ENCODE measurements at regions of chr7 and their contacts with region 1.

Region 1: GRCh38 chr7:73738612-73739374 is at the start of gene ABHD11:
- DNase-seq: peak; percentile 99
- ATAC-seq: peak; percentile 86
- H3K4me3 Mint-ChIP-seq: peak within 1 kb of the TSS; percentile 91
- H3K27ac Mint-ChIP-seq: peak within 1 kb of the TSS; percentile 93
- H3K4me1 Mint-ChIP-seq: peaks cover 19% of the 10 kb centered on the region
- H3K27me3 Mint-ChIP-seq: no peaks in the 10 kb centered on the region
- total RNA-seq, gene ABHD11: 14.4 to 17.8 TPM

Region 2: DNA sequence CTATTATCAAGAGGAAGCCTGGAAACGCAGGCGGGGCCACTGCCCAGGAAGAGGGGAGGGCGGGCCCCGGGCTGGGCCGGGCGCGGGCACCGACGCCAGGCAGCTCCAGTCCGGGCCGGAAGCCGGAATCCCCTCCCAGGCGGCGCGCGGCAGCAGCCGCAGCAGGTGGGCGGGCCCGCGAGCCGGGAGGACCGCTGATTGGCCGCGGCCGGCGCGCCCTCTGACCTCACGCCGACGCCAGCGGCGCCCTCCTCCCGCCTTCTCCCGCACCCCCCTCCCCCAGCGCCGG is 181.7 kb before region 1 on chr7:
- CTCF ChIA-PET with region 1: interaction called, 3 read pairs
- POLR2A ChIA-PET with region 1: interaction called, 3 read pairs
- intact Hi-C with region 1: loop called in 1 of 2 experiments (anchors 1 kb)
- DNase-seq: peak; percentile 95
- ATAC-seq: peak; percentile 92
- H3K4me3 Mint-ChIP-seq: peak overlapping the region; percentile 93
- H3K27ac Mint-ChIP-seq: peak overlapping the region; percentile 91
- H3K4me1 Mint-ChIP-seq: peaks cover 35% of the 10 kb centered on the region
- H3K27me3 Mint-ChIP-seq: no peaks in the 10 kb centered on the region

Region 3: GRCh38 chr7:73623798-73624668 is 114.8 kb before region 1 on chr7 and contains the start of gene MLXIPL:
- CTCF ChIA-PET with region 1: interaction called, 7 read pairs
- POLR2A ChIA-PET with region 1: no interaction called
- intact Hi-C with region 1: loop called in 1 of 2 experiments (anchors 1 kb)
- DNase-seq: peak; percentile 85
- ATAC-seq: peak; percentile 95
- H3K4me3 Mint-ChIP-seq: no peak within 1 kb of the TSS
- H3K27ac Mint-ChIP-seq: no peak within 1 kb of the TSS
- H3K4me1 Mint-ChIP-seq: peaks cover 8% of the 10 kb centered on the region
- H3K27me3 Mint-ChIP-seq: peaks cover 43% of the 10 kb centered on the region
- total RNA-seq, gene MLXIPL: not detected

Region 4: DNA sequence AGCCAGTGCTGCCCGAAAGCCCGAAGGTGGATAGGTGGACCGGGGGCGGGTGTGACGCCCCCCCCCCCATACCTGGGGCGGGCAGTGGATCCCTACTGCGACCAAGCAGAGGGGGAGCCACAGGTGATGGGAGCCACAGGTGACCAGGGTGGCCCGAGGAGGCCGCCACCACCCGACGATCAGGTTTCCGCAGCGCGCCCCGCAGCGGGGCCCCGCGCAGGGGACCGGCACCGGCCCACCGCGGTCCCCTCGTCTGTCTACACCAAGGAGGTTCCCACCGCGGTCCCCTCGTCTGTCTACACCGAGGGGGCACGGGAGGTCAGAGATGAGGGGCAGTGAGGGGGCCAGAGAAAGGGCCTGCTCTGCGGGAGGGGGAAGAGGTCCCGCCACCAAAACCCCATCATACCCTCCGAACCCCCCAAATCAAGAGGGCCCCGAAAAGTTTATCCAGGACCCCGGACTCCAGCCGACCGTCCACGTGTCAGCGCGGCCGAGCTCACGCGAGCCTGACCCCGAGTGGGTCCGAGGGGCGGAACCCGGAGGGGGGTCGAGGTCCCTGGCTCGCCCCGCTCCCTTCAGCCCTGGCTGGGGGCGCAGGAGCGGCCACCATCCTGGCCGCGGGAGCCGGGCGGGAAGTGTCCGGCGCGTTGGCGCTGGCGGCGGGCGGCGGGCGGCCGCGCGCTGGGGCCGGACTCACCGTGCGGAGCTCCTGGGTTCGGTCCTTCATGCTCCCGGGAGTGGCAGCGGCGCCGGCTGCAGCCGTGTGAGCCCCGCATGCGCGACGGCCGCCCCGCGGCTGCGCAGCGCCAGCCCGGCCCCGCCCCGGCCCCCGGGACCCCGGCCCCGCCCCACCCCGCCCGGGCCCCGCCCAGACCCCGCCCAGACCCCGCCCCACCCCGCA is 19.6 kb before region 1 on chr7 and contains the start of gene STX1A:
- CTCF ChIA-PET with region 1: interaction called, 3 read pairs
- POLR2A ChIA-PET with region 1: interaction called, 3 read pairs
- intact Hi-C with region 1: loop called (anchors 1 kb)
- DNase-seq: peak; percentile 85
- ATAC-seq: peak; percentile 59
- H3K4me3 Mint-ChIP-seq: peak within 1 kb of the TSS; percentile 75
- H3K27ac Mint-ChIP-seq: peak within 1 kb of the TSS; percentile 66
- H3K4me1 Mint-ChIP-seq: peaks cover 34% of the 10 kb centered on the region
- H3K27me3 Mint-ChIP-seq: peaks cover 4% of the 10 kb centered on the region
- total RNA-seq, gene STX1A: 16.6 to 16.8 TPM

Region 5: DNA sequence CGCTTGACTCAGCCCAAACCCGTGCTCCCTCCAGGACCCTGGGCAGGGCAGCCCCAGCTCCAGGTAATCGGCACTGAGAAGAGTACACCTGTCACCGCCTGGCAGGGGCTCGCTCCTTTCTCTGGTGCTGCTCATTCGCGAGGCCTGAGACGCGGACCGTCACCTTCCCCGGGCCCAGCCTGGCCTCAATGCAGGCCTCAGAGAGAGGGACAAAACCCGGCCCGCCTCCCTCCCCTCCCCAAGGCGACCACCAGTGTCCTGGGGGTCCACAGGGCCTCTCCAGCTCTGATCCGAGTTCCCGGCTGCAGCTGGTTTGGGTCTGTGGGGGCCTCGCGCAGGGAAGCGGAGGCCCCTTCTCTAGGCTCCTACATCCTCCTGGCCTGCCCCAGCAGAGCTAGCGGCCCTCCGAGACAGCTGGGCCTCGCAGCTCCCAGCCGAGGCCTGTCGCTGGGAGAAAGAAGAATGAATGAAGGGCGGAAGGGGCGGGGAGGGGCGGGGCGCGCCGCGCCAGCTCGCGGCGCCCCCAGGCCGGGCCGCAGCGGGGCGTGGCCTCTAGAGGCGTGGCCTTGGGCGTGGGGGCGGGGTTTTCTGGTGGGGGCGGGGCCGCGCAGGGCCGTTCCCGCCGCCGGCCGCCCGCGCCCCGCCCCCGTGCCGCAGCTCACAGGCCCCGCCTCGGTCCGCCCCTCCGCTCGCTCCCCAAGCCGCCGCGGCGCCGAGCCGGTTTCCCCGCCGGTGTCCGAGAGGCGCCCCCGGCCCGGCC is 344.5 kb after region 1 on chr7 and contains the start of gene LIMK1:
- CTCF ChIA-PET with region 1: no interaction called
- POLR2A ChIA-PET with region 1: no interaction called
- intact Hi-C with region 1: loop called in 1 of 2 experiments (anchors 2 kb)
- DNase-seq: peak; percentile 90
- ATAC-seq: peak; percentile 89
- H3K4me3 Mint-ChIP-seq: peak within 1 kb of the TSS; percentile 79
- H3K27ac Mint-ChIP-seq: peak within 1 kb of the TSS; percentile 77
- H3K4me1 Mint-ChIP-seq: peaks cover 5% of the 10 kb centered on the region
- H3K27me3 Mint-ChIP-seq: no peaks in the 10 kb centered on the region
- total RNA-seq, gene LIMK1: 12.5 to 14.8 TPM

Region 6: DNA sequence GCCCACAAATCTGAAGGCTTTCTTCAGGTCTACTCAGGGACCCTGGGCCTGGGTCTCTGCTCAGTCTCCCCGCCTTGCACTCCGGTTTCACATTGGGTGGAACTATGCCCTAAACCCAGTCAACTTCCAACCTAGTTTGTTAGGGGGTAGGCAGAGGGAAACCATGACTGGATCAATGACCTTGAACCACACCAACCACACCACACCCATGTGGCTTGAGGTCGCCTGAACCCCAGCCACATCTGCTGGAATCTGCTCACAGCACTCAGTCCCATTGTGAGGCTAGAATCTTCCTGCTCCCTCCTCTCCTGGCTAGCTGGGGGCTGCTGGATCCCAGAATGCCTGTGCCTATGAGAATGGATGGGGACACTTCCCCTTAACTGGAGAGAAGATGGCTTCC is 497.5 kb after region 1 on chr7:
- CTCF ChIA-PET with region 1: no interaction called
- POLR2A ChIA-PET with region 1: no interaction called
- intact Hi-C with region 1: no loop called
- DNase-seq: no peak
- ATAC-seq: no peak
- H3K4me3 Mint-ChIP-seq: no peak overlapping the region
- H3K27ac Mint-ChIP-seq: no peak overlapping the region
- H3K4me1 Mint-ChIP-seq: no peaks in the 10 kb centered on the region
- H3K27me3 Mint-ChIP-seq: no peaks in the 10 kb centered on the region

Region 7: GRCh38 chr7:74449809-74450397 is 711.1 kb after region 1 on chr7:
- CTCF ChIA-PET with region 1: no interaction called
- POLR2A ChIA-PET with region 1: no interaction called
- intact Hi-C with region 1: loop called in 1 of 2 experiments (anchors 1 kb)
- DNase-seq: peak; percentile 83
- ATAC-seq: peak; percentile 27
- H3K4me3 Mint-ChIP-seq: no peak overlapping the region
- H3K27ac Mint-ChIP-seq: no peak overlapping the region
- H3K4me1 Mint-ChIP-seq: peaks cover 14% of the 10 kb centered on the region
- H3K27me3 Mint-ChIP-seq: no peaks in the 10 kb centered on the region